AG04449 (cell line): ENCODE measurements at regions of chr1 and their contacts with region 1.

Region 1: DNA sequence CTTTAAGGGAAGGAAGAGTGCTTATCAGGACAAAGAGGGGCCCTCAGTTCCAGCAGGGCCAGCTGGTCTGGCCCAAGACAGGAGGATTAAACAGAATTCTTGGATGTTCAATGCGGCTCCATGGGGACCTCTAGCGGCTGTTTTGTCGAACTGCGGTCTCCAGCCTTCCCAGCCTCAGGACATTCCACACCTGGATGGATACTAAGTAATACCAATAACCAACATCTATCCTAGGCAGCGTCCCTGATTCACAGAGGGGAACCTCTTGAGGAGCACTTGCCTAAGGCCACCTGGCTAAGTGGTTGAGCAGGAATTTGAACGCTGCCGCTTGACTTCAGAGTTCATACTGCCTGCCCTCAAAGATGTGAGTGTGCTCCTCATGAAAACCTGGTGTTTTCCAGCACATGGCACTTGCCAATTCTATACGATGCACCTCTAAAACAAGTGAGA is 15.5 kb upstream of the CD247 start:
- DNase-seq: no peak
- H3K4me3 ChIP-seq: no peak overlapping the region
- CTCF ChIP-seq: peak; percentile 84

Region 2: DNA sequence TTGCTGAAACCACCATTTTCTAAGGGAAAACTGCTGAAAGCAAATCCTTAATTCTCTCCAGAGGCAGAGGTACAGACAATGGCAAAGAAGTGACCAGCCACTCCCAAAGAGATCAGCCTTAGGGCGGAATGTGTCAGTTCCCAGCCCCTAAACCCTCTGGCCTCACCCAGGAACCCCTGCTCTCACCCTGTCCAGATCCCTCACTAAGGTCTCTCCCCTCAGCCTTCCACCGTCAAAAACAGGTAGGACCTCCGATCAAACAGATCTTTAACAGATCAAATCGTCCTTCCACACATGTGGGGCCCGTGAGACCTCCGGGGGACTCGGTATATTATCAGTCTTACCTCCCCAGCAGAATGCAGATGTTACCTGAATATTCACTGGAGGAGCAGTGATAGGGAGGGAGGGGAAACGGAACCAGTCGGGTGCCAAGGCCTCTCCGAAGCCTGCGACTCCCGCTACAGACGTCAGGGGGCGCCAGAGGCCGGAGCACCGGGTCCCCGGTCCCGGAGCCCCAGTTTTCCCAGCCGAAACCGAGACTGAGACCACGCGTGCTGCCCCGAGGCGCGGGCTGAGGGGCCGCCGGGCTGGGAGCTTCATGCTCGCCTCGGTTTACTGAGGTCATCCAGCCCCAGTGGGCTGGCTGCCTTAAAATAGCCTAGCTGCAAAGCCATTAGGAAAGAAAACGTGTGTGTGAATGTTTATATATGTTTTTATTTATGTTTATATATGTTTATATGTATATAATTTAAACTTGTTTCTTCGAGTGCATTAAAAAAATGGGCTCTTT is 467.3 kb before region 1 on chr1:
- CTCF ChIA-PET with region 1: interaction called, 211 read pairs
- POLR2A ChIA-PET with region 1: no interaction called
- DNase-seq: no peak
- H3K4me3 ChIP-seq: peak overlapping the region; percentile 45
- CTCF ChIP-seq: peak; percentile 97

Region 3: GRCh38 chr1:167401260-167401873 is 132.5 kb before region 1 on chr1:
- CTCF ChIA-PET with region 1: interaction called, 21 read pairs
- POLR2A ChIA-PET with region 1: no interaction called
- DNase-seq: no peak
- H3K4me3 ChIP-seq: no peak overlapping the region
- CTCF ChIP-seq: peak; percentile 60

Region 4: DNA sequence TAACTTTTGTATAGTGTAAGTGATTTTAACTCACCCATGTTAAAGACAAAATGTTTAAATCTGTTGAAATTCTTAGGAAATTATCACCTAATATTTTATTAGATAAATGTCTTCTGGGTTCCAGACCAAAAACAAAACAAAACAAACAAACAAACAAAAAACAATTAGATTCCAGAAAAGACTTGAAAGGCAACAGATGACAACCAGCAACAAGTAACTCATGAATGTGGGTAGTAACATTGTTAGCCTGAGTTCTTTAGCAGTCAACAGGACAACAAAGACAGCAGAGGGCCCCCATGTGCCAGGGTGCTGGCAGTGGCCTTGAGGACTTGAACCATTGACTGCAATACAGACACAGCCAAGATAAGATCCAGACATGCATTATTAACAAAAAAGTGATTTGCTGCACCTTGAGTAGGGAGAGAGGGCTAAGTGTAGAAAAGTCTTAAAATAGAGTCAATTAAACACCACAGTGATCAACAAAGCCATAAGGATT is 13.1 kb before region 1 on chr1:
- CTCF ChIA-PET with region 1: interaction called, 23 read pairs
- POLR2A ChIA-PET with region 1: no interaction called
- DNase-seq: no peak
- H3K4me3 ChIP-seq: no peak overlapping the region
- CTCF ChIP-seq: no peak